ENCODE measurements at regions of chr11 and their contacts with region 1.

Region 1: GRCh38 chr11:112588252-112588694 is 327.6 kb upstream of the PLET1 start:
- DNase-seq: peak in 3 of 4 donors; percentile 42 to 85 (median 73)
- ATAC-seq: peak; percentile 94
- H3K4me3 ChIP-seq: no peak overlapping the region
- H3K27ac ChIP-seq: no peak overlapping the region
- H3K4me1 ChIP-seq: no peaks in the 10 kb centered on the region
- H3K27me3 ChIP-seq: no peaks in the 10 kb centered on the region
- CTCF ChIP-seq: peak; percentile 67 to 70

Region 2: DNA sequence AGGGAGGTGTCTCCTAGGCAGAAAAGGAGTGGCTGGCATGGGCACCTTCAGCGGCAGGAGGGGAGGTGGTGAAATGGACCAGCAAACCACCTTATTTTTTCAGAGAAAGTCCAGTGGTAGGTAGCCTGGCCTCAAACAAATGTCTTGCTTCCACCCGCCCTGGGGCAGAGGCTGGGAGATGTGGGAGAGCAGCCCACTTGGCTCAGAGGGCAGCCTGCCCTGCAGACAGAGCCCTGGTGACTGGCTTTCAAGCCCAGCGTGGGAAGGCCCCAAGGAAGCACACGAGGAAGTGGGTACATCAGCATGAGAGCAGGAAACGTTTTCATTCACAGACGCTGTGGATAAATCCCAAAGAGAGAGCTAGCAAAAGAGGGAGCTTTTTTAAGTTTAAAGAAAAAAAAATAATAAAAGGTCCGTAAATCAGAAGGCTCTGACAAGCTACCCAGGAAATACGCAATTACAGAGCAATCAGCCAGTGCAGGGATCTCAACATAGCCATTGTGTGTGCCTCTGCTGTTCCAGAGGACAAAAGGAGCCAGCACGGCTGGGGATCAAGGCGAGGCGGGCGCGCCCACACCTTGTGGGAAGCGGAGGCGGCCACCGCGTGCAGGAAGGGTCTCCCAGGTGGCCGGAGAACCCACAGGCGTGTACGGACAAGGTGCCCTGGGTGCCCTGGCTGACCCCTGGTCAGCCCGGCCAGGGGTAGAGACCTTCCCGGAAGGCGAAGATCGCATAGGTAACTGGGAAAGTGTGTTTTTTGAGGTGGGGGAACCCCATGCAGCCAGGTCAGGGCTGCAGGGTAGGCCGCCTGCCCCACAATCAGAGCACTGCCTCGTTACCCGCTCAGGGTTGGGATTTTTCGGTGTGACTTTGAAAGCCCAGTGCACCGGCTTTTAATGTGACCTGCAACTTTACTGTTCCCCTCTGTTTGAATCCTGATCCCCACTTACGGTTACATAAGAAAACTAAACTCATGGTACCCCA is 88.8 kb before region 1 on chr11:
- intact Hi-C with region 1: no loop called
- DNase-seq: no peak
- ATAC-seq: no peak
- H3K4me3 ChIP-seq: no peak overlapping the region
- H3K27ac ChIP-seq: no peak overlapping the region
- H3K4me1 ChIP-seq: no peaks in the 10 kb centered on the region
- H3K27me3 ChIP-seq: no peaks in the 10 kb centered on the region
- CTCF ChIP-seq: no peak

Region 3: GRCh38 chr11:112707681-112708080 is 119.4 kb after region 1 on chr11:
- intact Hi-C with region 1: no loop called
- DNase-seq: no peak
- ATAC-seq: no peak
- H3K4me3 ChIP-seq: no peak overlapping the region
- H3K27ac ChIP-seq: no peak overlapping the region
- H3K4me1 ChIP-seq: no peaks in the 10 kb centered on the region
- H3K27me3 ChIP-seq: no peaks in the 10 kb centered on the region
- CTCF ChIP-seq: no peak

Region 4: DNA sequence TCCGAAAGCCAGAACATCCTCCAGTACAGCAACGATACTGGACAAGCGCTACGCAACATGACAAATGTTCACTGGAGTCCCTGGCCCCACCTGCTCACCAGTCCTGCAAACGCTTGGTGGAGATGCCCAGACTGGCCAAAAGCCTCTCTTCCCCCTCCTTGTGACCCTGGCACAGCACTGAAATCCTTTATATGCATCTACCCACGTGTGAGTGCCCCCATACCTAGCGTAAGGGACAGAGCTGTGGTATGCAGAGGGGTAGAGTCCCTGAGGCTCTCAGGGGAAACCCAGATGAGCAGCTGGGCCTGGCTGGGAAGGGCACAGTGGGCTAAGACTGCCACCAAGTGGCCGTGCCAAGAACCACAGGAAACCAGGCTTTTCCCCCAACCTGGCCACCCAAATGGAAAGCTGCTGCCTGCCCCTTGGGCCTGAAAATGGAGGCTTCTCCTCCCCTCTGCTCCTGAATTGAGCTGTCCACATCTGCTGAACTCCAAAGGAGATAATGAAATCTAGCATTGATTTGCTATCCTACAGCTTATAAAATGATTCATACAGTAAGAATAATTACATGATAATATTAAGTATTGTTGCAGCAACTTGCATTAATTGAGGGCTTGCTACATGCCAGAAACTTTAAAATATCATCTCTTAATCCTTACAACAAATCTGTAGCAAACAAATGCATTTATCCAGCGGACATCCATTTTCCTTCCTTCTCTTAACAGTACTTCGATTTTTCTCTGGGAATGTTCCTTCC is 701.3 kb after region 1 on chr11:
- intact Hi-C with region 1: loop called (anchors 5 to 10 kb)
- DNase-seq: peak; percentile 45 to 80 (median 62)
- ATAC-seq: peak; percentile 97
- H3K4me3 ChIP-seq: no peak overlapping the region
- H3K27ac ChIP-seq: no peak overlapping the region
- H3K4me1 ChIP-seq: no peaks in the 10 kb centered on the region
- H3K27me3 ChIP-seq: no peaks in the 10 kb centered on the region
- CTCF ChIP-seq: peak; percentile 84 to 86